IMR-90 (cell line): ENCODE measurements at regions of chr10 and their contacts with region 1.

Region 1: GRCh38 chr10:115969591-115969990 is 303.4 kb downstream of the GFRA1 start:
- DNase-seq: no peak
- ATAC-seq: no peak
- H3K4me3 ChIP-seq: no peak overlapping the region
- H3K27ac ChIP-seq: no peak overlapping the region
- H3K4me1 ChIP-seq: no peaks in the 10 kb centered on the region
- H3K27me3 ChIP-seq: peaks cover 4% of the 10 kb centered on the region; the same call in 1 of the 2 replicates
- CTCF ChIP-seq: no peak
- POLR2A ChIP-seq: no peak
- RAD21 ChIP-seq: no peak

Region 2: GRCh38 chr10:115985786-115986185 is 16.2 kb after region 1 on chr10:
- CTCF ChIA-PET with region 1: interaction called, 3 read pairs
- POLR2A ChIA-PET with region 1: interaction called, 10 read pairs
- dilution Hi-C with region 1: no loop called
- in situ Hi-C with region 1: no loop called
- intact Hi-C with region 1: no loop called
- DNase-seq: peak; percentile 36
- ATAC-seq: peak; percentile 30
- H3K4me3 ChIP-seq: no peak overlapping the region
- H3K27ac ChIP-seq: no peak overlapping the region
- H3K4me1 ChIP-seq: peaks cover 2% of the 10 kb centered on the region; the same call in 1 of the 2 replicates
- H3K27me3 ChIP-seq: no peaks in the 10 kb centered on the region; the same call in 1 of the 2 replicates
- CTCF ChIP-seq: no peak
- POLR2A ChIP-seq: no peak
- RAD21 ChIP-seq: no peak